Activated T-helper 1 cell treated with anti-CD3 and anti-CD28 coated beads, Interleukin-12 subunit alpha, Interleukin-12 subunit beta, Interleukin-2, Interleukin-4 antibody, amounts not matched to agents 30 ng/mL and 10 ng/mL and 1 ng/mL, durations not matched to agents 14 hours and 24 hours and 36 hours (primary cell): ENCODE measurements at regions of chr10 and their contacts with region 1.

Region 1: GRCh38 chr10:27360581-27361172 is 120.1 kb upstream of the ACBD5 start:
- DNase-seq: peak; percentile 74
- H3K4me3 Mint-ChIP-seq: no peak overlapping the region
- H3K27ac Mint-ChIP-seq: no peak overlapping the region
- H3K4me1 Mint-ChIP-seq: peaks cover 3% of the 10 kb centered on the region
- H3K27me3 Mint-ChIP-seq: no peaks in the 10 kb centered on the region

Region 2: DNA sequence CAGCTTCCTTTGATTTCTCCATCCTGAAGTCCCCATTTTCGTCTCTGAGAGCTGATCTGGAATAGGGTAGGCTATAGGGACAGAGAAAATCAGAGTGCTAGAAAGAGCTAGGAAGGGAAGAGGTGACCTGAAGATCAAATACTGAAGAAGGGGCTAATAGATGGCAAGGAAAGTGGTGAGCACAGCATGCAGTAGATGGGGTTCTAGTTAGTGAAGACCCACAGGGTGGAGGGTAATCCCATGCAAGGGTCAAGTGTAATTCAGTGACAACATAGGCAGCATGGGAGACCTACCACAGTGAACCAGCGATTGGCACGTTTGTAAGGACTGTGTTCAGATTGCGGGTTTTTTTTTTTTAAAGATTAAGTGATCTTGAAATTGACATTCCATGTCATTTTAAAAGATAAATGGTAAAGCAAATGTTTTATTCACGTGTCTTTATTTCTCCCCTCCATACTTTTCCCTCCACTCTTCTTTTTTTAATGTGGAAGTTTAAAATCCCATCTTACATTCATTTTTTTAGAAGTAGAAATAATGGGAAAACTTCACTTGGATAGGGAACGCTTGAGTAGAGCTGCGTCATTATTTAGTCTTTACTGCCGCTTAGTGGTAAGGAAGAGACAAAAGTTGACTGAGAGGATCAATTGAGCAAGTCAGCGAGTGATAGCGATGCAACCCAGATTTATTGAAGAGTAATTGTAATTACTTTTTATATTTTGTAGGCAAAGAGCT is 478.9 kb before region 1 on chr10:
- intact Hi-C with region 1: loop called (anchors 2 kb)
- DNase-seq: no peak
- H3K4me3 Mint-ChIP-seq: no peak overlapping the region
- H3K27ac Mint-ChIP-seq: no peak overlapping the region
- H3K4me1 Mint-ChIP-seq: peaks cover 6% of the 10 kb centered on the region
- H3K27me3 Mint-ChIP-seq: peaks cover 17% of the 10 kb centered on the region

Region 3: GRCh38 chr10:26890956-26891355 is 469.7 kb before region 1 on chr10:
- intact Hi-C with region 1: loop called (anchors 1 kb)
- DNase-seq: peak; percentile 22
- H3K4me3 Mint-ChIP-seq: no peak overlapping the region
- H3K27ac Mint-ChIP-seq: no peak overlapping the region
- H3K4me1 Mint-ChIP-seq: no peaks in the 10 kb centered on the region
- H3K27me3 Mint-ChIP-seq: peaks cover 8% of the 10 kb centered on the region

Region 4: GRCh38 chr10:26960308-26960707 is 400.4 kb before region 1 on chr10:
- intact Hi-C with region 1: no loop called
- DNase-seq: no peak
- H3K4me3 Mint-ChIP-seq: no peak overlapping the region
- H3K27ac Mint-ChIP-seq: no peak overlapping the region
- H3K4me1 Mint-ChIP-seq: no peaks in the 10 kb centered on the region
- H3K27me3 Mint-ChIP-seq: no peaks in the 10 kb centered on the region

Region 5: GRCh38 chr10:27019827-27020226 is 340.9 kb before region 1 on chr10:
- intact Hi-C with region 1: loop called (anchors 10 kb)
- DNase-seq: no peak
- H3K4me3 Mint-ChIP-seq: no peak overlapping the region
- H3K27ac Mint-ChIP-seq: no peak overlapping the region
- H3K4me1 Mint-ChIP-seq: peaks cover 16% of the 10 kb centered on the region
- H3K27me3 Mint-ChIP-seq: peaks cover 2% of the 10 kb centered on the region

Region 6: DNA sequence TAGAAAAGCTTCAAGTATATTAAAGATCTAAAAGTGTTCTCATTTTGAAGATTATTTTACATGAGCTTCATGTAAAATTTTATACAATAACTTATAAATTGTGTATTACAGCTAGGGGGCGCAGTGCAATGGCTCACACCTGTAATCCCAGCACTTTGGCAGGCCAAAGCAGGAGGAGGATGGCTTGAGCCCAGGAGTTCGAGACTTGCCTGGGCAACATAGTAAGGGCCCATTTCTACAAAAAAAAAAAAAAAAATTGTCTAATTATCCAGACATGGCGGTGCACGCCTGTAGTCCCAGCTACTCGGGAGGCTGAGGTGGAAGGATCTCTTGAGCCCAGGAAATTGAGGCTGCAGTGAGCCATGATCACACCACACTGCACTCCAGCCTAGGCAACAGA is 136.7 kb before region 1 on chr10:
- intact Hi-C with region 1: loop called (anchors 1 kb)
- DNase-seq: no peak
- H3K4me3 Mint-ChIP-seq: no peak overlapping the region
- H3K27ac Mint-ChIP-seq: peak overlapping the region; percentile 34
- H3K4me1 Mint-ChIP-seq: peaks cover 11% of the 10 kb centered on the region
- H3K27me3 Mint-ChIP-seq: no peaks in the 10 kb centered on the region